ENCODE measurements at regions of chr16 and their contacts with region 1.

Region 1: GRCh38 chr16:65121870-65122723 is at the start of gene CDH11:
- DNase-seq: no peak
- H3K4me3 ChIP-seq: peak within 1 kb of the TSS; percentile 73 to 81
- H3K27ac ChIP-seq: peak within 1 kb of the TSS; percentile 91
- H3K4me1 ChIP-seq: peaks cover 26% of the 10 kb centered on the region
- H3K27me3 ChIP-seq: no peaks in the 10 kb centered on the region
- CTCF ChIP-seq: peak in 1 of 3 experiments; percentile 48
- POLR2A ChIP-seq: peak in 1 of 2 donors; percentile 57
- total RNA-seq, gene CDH11: 45.2 TPM

Region 2: GRCh38 chr16:65059406-65059980 is 62.6 kb before region 1 on chr16:
- intact Hi-C with region 1: no loop called
- DNase-seq: no peak
- H3K4me3 ChIP-seq: no peak overlapping the region
- H3K27ac ChIP-seq: no peak overlapping the region
- H3K4me1 ChIP-seq: no peaks in the 10 kb centered on the region
- H3K27me3 ChIP-seq: no peaks in the 10 kb centered on the region
- CTCF ChIP-seq: no peak
- POLR2A ChIP-seq: no peak

Region 3: GRCh38 chr16:66266436-66267291 is 1144.6 kb after region 1 on chr16:
- intact Hi-C with region 1: loop called (anchors 5 kb)
- DNase-seq: peak; percentile 82 to 90
- H3K4me3 ChIP-seq: no peak overlapping the region
- H3K27ac ChIP-seq: peak overlapping the region; percentile 46
- H3K4me1 ChIP-seq: peaks cover 55% of the 10 kb centered on the region
- H3K27me3 ChIP-seq: no peaks in the 10 kb centered on the region
- CTCF ChIP-seq: no peak
- POLR2A ChIP-seq: no peak

Measured in vagina (tissue), 2 donors.